ENCODE measurements at regions of chr6 and their contacts with region 1.

Region 1: DNA sequence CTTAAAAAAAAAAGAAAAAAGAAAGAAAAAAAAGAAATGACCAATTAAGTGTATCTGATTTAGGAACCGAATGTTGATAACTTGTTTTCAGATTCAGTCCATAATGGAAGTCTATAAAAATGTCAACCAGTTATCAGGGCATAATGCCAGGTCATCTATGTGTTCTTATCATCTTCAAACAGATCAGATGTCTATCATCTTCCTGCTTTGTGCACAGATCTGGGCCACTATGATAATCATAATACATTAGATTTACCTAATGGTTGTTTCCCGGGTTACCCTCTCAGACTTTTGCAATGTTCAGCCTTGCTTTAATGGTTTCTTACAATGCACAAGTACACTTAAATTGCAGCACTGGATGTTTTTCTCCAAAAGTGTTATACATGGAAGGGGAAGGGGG is 100.6 kb downstream of the NKAIN2 start:
- DNase-seq: no peak
- H3K4me3 ChIP-seq: no peak overlapping the region
- H3K27ac ChIP-seq: no peak overlapping the region
- H3K4me1 ChIP-seq: no peaks in the 10 kb centered on the region
- H3K27me3 ChIP-seq: no peaks in the 10 kb centered on the region
- CTCF ChIP-seq: no peak
- POLR2A ChIP-seq: no peak

Region 2: GRCh38 chr6:123733180-123733956 is 170.9 kb before region 1 on chr6:
- intact Hi-C with region 1: no loop called
- DNase-seq: no peak
- H3K4me3 ChIP-seq: no peak overlapping the region
- H3K27ac ChIP-seq: no peak overlapping the region
- H3K4me1 ChIP-seq: no peaks in the 10 kb centered on the region
- H3K27me3 ChIP-seq: no peaks in the 10 kb centered on the region
- CTCF ChIP-seq: no peak
- POLR2A ChIP-seq: no peak

Region 3: DNA sequence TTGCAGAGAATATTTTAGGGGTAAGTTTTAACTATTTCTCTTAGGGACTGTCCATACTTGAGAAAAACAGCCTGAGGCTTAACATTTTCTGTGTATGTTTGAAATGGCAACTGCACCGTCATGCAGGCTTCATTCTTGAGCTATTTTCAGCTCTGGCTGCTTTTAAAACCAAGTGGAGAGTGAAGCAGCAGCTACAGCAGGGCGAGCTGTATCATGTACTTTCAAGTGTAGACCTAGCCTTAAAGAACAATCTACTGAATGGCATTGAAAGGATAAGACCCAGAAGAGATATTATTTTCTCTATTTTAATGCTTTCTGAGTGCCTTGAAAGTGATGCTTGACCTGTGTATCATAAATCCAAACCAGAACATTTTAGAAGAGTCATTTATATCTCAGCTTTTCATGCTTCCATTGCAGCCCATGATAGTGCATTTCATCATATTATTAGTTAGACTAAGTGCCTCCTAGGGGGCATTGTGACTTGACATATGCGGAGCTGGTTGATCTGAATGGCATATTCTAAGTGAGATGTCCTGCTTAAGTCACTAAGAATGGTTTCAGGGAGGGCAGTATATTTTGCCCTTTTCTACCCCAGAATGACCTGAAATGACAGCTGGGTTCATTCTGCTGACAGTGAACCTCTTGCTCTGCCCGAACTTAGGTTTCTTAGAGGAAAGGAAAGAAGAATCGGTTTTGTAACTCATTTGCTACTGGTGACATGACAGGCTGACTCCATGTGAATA is 15.3 kb before region 1 on chr6:
- intact Hi-C with region 1: loop called (anchors 2 kb)
- DNase-seq: no peak
- H3K4me3 ChIP-seq: no peak overlapping the region
- H3K27ac ChIP-seq: no peak overlapping the region
- H3K4me1 ChIP-seq: no peaks in the 10 kb centered on the region
- H3K27me3 ChIP-seq: no peaks in the 10 kb centered on the region
- CTCF ChIP-seq: no peak
- POLR2A ChIP-seq: no peak

Region 4: DNA sequence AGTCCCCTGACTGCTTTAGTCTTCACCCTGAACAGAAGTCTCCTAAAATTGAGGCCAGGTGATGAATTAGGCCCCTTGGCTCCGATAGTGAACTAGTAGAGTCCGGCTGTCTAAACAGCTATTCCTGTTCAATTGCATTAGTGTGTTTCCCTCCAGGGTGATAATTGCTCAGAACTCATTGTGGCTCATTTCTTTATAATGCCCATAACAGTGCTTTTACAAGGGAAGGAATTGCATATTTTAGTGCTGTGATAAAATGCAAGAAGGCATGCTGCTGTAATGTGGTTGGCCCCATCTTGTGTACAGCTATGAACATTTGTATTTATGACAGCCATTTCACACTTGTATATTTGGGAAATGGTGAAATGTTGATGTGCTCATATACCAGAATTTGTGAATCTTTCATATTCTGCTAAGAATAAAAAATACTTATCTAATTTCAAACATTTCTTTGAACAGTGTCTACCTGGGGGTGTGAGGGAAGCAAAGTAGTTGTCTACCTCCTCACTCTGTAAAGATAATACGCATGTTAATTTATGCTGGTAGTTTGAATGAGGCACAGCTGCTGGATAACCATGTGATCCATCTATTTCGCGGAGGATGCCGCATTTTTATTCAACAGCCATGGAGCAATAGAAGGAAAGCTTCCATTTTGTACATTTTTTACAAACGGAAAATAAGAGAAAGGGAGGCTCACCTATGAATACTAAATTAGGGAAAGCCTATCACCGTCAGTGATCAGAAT is 350.9 kb after region 1 on chr6:
- intact Hi-C with region 1: no loop called
- DNase-seq: no peak
- H3K4me3 ChIP-seq: no peak overlapping the region
- H3K27ac ChIP-seq: no peak overlapping the region
- H3K4me1 ChIP-seq: no peaks in the 10 kb centered on the region
- H3K27me3 ChIP-seq: no peaks in the 10 kb centered on the region
- CTCF ChIP-seq: no peak
- POLR2A ChIP-seq: no peak